Activated CD8-positive, alpha-beta T cell treated with anti-CD3 and anti-CD28 coated beads for 36 hours (primary cell): ENCODE measurements at regions of chr1 and their contacts with region 1.

Region 1: GRCh38 chr1:16366722-16367257 is at the start of gene SZRD1:
- DNase-seq: peak; percentile 98
- ATAC-seq: peak; percentile 87
- H3K4me3 Mint-ChIP-seq: peak within 1 kb of the TSS; percentile 98
- H3K27ac Mint-ChIP-seq: peak within 1 kb of the TSS; percentile 100
- H3K4me1 Mint-ChIP-seq: peaks cover 35% of the 10 kb centered on the region
- H3K27me3 Mint-ChIP-seq: no peaks in the 10 kb centered on the region
- CTCF ChIP-seq: no peak
- total RNA-seq, gene SZRD1: 175 to 177 TPM

Region 2: DNA sequence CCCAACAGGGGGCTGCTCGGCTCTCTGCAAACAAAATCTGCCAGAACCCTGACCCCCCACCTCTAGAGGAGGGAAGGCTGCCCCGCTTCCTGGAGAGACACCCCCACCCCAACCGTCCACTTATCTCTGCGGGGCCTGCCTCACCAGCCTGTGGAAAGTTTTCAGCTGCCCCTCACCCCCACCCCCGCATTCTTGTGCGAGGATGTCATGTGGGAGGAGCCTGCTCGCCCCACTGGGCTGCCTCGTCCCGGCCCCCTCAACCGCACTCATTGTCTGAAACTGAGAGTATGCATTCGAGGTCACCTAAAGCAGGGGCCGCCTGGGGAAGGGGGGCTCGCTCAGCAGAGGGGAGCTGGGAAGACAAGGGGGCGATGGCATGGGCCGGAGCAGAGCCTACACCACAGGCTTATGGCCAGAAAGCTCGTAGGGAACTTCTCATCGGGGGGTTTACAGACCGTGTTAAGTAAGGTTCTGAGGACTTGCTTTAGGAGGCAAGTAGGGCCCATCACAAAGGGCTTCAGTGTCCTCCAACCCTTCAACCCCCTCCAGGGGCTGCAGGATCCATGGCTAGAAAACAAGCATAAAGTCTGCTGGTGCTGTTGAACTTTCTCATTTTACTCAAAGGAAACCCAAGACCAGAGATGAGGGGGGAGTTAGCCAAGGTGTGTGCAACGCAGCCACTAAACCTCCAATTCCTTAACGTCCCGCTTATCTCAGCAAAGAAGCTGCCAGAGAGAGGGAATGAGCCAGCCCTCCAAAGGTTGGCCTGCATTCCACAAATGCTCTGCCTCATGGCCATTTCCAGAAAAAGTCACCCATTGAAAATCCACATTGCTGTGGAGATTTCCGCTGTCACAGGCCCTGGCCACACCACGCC is 220.3 kb before region 1 on chr1:
- CTCF ChIA-PET with region 1: no interaction called
- POLR2A ChIA-PET with region 1: no interaction called
- intact Hi-C with region 1: no loop called
- DNase-seq: peak; percentile 50
- ATAC-seq: no peak
- H3K4me3 Mint-ChIP-seq: no peak overlapping the region
- H3K27ac Mint-ChIP-seq: no peak overlapping the region
- H3K4me1 Mint-ChIP-seq: peaks cover 5% of the 10 kb centered on the region
- H3K27me3 Mint-ChIP-seq: peaks cover 5% of the 10 kb centered on the region
- CTCF ChIP-seq: no peak

Region 3: DNA sequence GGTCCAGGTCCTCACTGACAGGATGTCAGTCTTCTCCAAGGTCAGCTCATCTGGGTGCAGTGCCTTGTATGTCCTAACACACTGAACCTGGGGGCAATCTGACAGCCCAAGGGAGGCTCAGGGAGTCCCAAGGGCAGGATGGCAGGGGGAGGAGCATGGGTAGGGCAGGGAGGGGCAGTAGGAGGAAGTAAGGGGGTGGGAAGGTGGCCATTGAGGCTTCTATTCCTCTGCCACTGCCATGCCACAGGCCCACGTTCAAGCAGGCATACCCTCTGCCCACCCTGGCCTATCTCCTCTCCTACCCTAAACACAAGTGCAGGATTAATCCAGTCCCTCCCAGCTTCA is 167.7 kb before region 1 on chr1:
- CTCF ChIA-PET with region 1: no interaction called
- POLR2A ChIA-PET with region 1: no interaction called
- intact Hi-C with region 1: no loop called
- DNase-seq: no peak
- ATAC-seq: peak; percentile 56
- H3K4me3 Mint-ChIP-seq: no peak overlapping the region
- H3K27ac Mint-ChIP-seq: no peak overlapping the region
- H3K4me1 Mint-ChIP-seq: peaks cover 6% of the 10 kb centered on the region
- H3K27me3 Mint-ChIP-seq: no peaks in the 10 kb centered on the region
- CTCF ChIP-seq: no peak

Region 4: DNA sequence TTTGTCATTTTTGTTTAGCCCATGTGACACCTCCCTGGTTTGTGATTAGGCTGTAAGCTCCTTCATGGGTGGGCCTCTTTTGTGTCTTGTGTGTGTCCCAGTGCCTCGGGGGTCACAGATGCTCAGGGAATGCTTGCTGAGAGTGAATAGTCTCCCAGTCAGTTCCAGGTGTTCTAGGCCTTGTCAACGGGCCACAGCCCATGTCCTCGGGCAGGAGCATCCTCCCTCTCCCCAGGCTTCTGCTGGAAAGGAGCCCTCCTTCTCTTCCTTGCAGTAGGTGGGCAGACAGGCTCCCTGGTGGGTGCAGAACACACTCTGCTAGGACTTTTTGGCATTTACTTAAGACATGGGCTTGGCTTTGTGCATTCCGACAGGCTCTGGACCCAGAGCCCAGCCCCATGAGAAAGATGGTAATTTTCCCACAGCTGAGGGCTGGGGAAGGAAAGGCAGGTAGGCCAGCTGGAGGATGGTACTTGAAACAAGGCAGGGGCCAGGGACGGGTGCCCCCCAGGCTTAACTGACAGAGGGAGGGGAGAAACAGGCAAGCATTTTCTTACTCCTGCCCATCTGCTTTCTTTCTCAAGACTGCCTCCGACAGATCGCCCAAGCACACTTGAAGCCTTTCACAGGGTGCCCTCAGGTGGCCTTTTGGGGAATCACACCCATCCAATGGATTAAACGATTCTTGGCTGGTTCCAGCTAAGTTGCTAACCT is 122.7 kb before region 1 on chr1:
- CTCF ChIA-PET with region 1: interaction called, 20 read pairs
- POLR2A ChIA-PET with region 1: no interaction called
- intact Hi-C with region 1: loop called (anchors 10 kb)
- DNase-seq: peak; percentile 89
- ATAC-seq: peak; percentile 94
- H3K4me3 Mint-ChIP-seq: no peak overlapping the region
- H3K27ac Mint-ChIP-seq: no peak overlapping the region
- H3K4me1 Mint-ChIP-seq: peaks cover 5% of the 10 kb centered on the region
- H3K27me3 Mint-ChIP-seq: no peaks in the 10 kb centered on the region
- CTCF ChIP-seq: peak; percentile 87

Region 5: DNA sequence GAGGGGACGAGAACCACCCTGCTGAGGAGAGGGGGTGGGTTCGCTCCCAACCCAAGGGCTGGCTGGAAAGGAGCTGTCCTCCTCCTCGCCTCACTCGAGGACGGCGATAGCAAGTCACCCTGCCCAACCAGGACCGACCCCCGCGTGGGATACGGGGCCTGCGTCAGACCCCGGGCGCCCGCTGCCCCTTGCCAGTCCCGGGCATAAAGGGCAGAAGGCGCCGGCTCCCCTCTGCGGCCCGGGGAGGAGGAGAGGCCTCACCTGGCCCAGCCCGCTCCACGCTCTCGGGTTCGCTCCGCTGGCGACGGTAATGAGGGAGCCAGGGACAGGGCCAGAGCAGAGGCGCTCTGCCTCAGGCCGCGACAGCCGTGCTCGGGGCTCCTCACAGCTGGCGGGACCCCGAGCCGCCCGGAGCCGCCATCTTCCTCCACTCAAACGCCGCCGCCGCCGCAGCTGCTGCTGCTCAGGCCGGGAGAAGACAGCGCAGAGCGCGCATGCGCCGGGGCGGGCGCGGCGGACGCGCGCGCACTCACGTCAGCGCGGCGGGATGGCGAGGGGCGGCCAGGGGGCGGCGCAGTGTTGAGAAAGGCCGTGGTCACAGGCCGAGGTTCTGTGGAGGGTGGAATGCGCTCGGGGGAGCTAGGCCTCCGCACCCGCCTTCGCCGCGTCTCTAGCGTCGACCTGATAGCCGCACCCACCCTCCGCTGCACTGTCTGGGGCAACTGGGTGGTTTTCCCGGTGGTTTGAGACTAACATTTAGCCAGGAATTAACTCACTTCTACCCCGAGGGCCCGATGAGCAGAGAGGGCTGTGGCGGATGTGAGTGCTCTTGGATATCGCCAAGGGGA is 14.6 kb before region 1 on chr1 and contains the start of gene FBXO42:
- CTCF ChIA-PET with region 1: interaction called, 53 read pairs
- POLR2A ChIA-PET with region 1: interaction called, 12 read pairs
- intact Hi-C with region 1: no loop called
- DNase-seq: peak; percentile 92
- ATAC-seq: peak; percentile 92
- H3K4me3 Mint-ChIP-seq: peak within 1 kb of the TSS; percentile 84
- H3K27ac Mint-ChIP-seq: peak within 1 kb of the TSS; percentile 96
- H3K4me1 Mint-ChIP-seq: peaks cover 30% of the 10 kb centered on the region
- H3K27me3 Mint-ChIP-seq: no peaks in the 10 kb centered on the region
- CTCF ChIP-seq: peak; percentile 40
- total RNA-seq, gene FBXO42: 19.8 to 21.3 TPM

Region 6: DNA sequence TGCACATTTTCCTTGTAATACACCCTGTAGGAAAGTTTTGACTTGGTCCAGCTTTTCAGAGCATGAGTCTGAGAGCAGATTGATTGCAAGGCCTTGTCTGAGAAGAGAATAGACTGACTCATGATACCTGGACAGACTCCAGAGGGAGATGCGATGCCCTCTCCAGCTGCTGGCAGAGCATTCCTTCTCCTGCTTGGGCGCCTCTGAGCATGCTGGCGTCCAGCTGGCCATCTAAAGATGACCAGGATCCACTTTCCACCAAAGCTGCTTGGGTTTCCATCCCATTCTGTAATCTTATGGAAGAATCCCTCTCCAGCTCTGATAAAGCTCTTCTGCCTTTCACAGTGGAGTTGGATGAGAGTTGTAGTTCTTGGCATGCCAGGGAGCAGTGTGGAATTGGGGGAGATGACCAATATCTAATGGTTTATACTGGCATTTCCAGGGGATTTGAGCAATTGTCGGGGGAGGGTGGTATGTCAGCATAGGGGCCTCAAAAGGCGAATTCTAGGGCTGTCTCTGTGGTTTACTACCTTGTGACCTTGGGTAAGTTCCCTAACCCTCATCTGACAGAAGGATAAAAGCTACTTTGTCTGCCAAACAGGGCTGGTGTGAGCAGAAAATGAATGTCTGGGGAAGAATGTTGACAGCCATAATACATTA is 19.8 kb after region 1 on chr1:
- CTCF ChIA-PET with region 1: interaction called, 6 read pairs
- POLR2A ChIA-PET with region 1: interaction called, 13 read pairs
- intact Hi-C with region 1: no loop called
- DNase-seq: no peak
- ATAC-seq: peak; percentile 48
- H3K4me3 Mint-ChIP-seq: peak overlapping the region; percentile 56
- H3K27ac Mint-ChIP-seq: peak overlapping the region; percentile 86
- H3K4me1 Mint-ChIP-seq: peaks cover 71% of the 10 kb centered on the region
- H3K27me3 Mint-ChIP-seq: no peaks in the 10 kb centered on the region
- CTCF ChIP-seq: no peak

Region 7: GRCh38 chr1:16440470-16441281 is 73.9 kb after region 1 on chr1 and contains the start of gene NECAP2:
- CTCF ChIA-PET with region 1: interaction called, 6 read pairs
- POLR2A ChIA-PET with region 1: interaction called, 12 read pairs
- intact Hi-C with region 1: no loop called
- DNase-seq: peak; percentile 96
- ATAC-seq: peak; percentile 92
- H3K4me3 Mint-ChIP-seq: peak within 1 kb of the TSS; percentile 88
- H3K27ac Mint-ChIP-seq: peak within 1 kb of the TSS; percentile 86
- H3K4me1 Mint-ChIP-seq: peaks cover 33% of the 10 kb centered on the region
- H3K27me3 Mint-ChIP-seq: no peaks in the 10 kb centered on the region
- CTCF ChIP-seq: peak; percentile 93
- total RNA-seq, gene NECAP2: 53.1 to 54.7 TPM